Sciatic nerve (tissue), 2 donors: ENCODE measurements at regions of chr6 and their contacts with region 1.

Region 1: DNA sequence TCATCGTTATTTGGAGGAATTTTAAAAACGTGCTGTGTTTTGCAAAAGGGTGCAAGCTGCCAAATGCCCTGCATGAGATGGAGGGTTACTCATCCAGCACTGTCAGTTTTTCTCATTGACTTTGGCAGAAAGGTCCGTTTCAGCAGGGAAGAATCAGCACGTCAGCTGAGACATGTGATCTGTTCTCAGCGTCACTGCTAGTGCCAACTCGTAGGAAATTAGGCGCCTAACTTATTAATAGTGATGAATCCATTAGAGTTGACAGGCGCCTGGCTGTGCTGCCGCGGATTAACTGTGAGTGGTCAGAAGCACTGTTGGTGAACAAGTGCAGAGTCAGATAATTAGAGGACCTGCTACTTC is 175.5 kb upstream of the FOXQ1 start:
- DNase-seq: no peak
- ATAC-seq: peak; percentile 87

Region 2: DNA sequence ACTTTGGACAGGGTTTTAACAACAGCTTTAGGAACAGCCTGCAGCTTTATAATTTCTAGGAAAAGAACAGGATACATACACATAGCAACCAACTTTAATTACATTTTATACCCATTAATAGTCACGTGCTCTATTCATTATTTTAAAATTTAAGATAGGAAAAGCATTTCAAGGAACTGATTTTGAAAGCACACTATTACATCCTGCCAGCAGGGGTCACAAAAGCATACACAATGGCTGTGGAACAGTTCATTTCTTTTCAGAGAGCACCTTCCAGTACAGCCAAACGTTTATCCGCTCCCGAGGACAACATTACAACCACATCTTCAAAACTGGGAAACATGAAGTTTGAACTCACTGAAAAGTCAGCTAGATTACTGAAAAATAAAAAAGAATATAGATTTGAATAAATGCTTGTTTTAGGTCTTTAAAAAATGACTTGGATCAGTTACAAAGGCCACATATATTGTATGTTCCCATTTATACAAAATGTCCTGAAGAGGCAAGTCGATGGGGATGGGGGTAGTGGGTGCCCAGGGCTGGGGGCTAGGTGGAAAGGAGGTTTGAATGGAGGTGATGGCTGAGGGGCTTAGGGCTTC is 338.8 kb before region 1 on chr6:
- intact Hi-C with region 1: no loop called
- DNase-seq: no peak
- ATAC-seq: peak; percentile 72

Region 3: GRCh38 chr6:1100269-1100668 is 36.1 kb before region 1 on chr6:
- intact Hi-C with region 1: loop called (anchors 1 kb)
- DNase-seq: no peak
- ATAC-seq: no peak